Left ventricle myocardium inferior (tissue), 1 donor: ENCODE measurements at regions of chr4 and their contacts with region 1.

Region 1: GRCh38 chr4:145154573-145154972 is 25.8 kb downstream of the OTUD4 start:
- DNase-seq: no peak
- H3K4me3 ChIP-seq: no peak overlapping the region
- H3K27ac ChIP-seq: peak overlapping the region; percentile 77
- H3K4me1 ChIP-seq: peaks cover 30% of the 10 kb centered on the region
- H3K27me3 ChIP-seq: no peaks in the 10 kb centered on the region
- CTCF ChIP-seq: peak; percentile 65

Region 2: GRCh38 chr4:145099653-145100052 is 54.9 kb before region 1 on chr4:
- intact Hi-C with region 1: loop called (anchors 10 kb)
- DNase-seq: no peak
- H3K4me3 ChIP-seq: peak overlapping the region; percentile 86
- H3K27ac ChIP-seq: peak overlapping the region; percentile 93
- H3K4me1 ChIP-seq: peaks cover 66% of the 10 kb centered on the region
- H3K27me3 ChIP-seq: no peaks in the 10 kb centered on the region
- CTCF ChIP-seq: no peak

Region 3: GRCh38 chr4:145618932-145619638 is 464.5 kb after region 1 on chr4 and contains the start of gene MMAA:
- intact Hi-C with region 1: loop called (anchors 10 kb)
- DNase-seq: peak; percentile 97
- H3K4me3 ChIP-seq: peak within 1 kb of the TSS; percentile 82
- H3K27ac ChIP-seq: peak within 1 kb of the TSS; percentile 97
- H3K4me1 ChIP-seq: peaks cover 31% of the 10 kb centered on the region
- H3K27me3 ChIP-seq: no peaks in the 10 kb centered on the region
- CTCF ChIP-seq: peak; percentile 75
- total RNA-seq, gene MMAA: 7.2 TPM

Region 4: GRCh38 chr4:145785391-145786008 is 630.9 kb after region 1 on chr4:
- intact Hi-C with region 1: no loop called
- DNase-seq: no peak
- H3K4me3 ChIP-seq: no peak overlapping the region
- H3K27ac ChIP-seq: peak overlapping the region; percentile 13
- H3K4me1 ChIP-seq: peaks cover 29% of the 10 kb centered on the region
- H3K27me3 ChIP-seq: no peaks in the 10 kb centered on the region
- CTCF ChIP-seq: no peak